SK-N-SH (cell line): ENCODE measurements at regions of chr11 and their contacts with region 1.

Region 1: GRCh38 chr11:125404776-125405435 is 91.2 kb downstream of the FEZ1 start:
- DNase-seq: peak; percentile 91
- H3K4me3 ChIP-seq: peak overlapping the region in 1 of 2 experiments; percentile 19; a peak in 1 of 4 replicates
- H3K27ac ChIP-seq: no peak overlapping the region
- H3K4me1 ChIP-seq: peaks cover 0 to under 1% of the 10 kb centered on the region in 2 experiments; a peak in 1 of 4 replicates
- H3K27me3 ChIP-seq: peaks cover 43% of the 10 kb centered on the region; the same call in 1 of the 2 replicates
- CTCF ChIP-seq: peak; percentile 83
- EP300 ChIP-seq: no peak
- RAD21 ChIP-seq: peak; percentile 86

Region 2: GRCh38 chr11:125111343-125112207 is 293.3 kb before region 1 on chr11 and contains the start of gene TMEM218:
- CTCF ChIA-PET with region 1: interaction called, 12 read pairs
- POLR2A ChIA-PET with region 1: no interaction called
- DNase-seq: peak; percentile 93
- H3K4me3 ChIP-seq: peak within 1 kb of the TSS; percentile 79 to 100
- H3K27ac ChIP-seq: peak within 1 kb of the TSS; percentile 46 to 84; a peak in 3 of 4 replicates
- H3K4me1 ChIP-seq: peaks cover 5 to 8% of the 10 kb centered on the region in 2 experiments; a peak in 3 of 4 replicates
- H3K27me3 ChIP-seq: no peaks in the 10 kb centered on the region
- CTCF ChIP-seq: no peak
- EP300 ChIP-seq: no peak
- RAD21 ChIP-seq: no peak
- polyA plus RNA-seq, gene TMEM218: 34.8 and 36.2 TPM in 2 replicates

Region 3: DNA sequence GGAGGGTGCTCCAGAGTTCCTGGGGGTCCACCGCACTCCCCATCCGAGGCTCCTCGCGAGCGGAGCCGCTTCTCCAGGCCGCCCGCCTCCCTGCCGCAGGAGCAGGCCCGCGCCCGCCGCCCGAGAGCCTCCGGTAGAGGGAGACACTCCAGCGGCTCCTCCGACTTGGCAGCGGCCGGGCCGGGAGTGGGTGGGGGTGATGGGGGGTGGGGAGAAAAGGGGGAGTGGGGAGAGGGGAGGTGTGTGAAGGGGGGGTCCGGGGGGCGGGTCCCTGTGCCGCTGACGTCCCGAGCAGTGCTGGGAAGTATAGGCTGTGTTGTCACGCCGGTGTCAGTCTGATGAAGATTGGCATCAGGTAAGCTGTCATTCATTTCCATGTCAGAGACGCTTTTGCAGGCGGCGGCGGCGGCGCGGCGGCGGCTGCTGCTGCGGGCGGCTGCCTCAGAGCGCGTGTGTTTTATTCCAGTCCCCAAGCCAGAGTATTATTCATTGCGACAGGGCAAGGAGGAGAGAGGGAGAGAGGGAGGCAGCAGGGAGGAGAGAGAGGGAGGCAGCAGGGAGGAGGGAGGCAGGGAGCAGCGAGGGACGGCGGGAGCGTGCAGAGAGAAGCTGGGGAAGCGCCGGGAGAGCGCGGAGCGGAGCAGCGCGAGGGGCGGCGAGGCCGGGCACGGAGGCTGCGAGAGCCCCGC is 240.3 kb before region 1 on chr11 and contains the start of gene PKNOX2:
- CTCF ChIA-PET with region 1: interaction called, 18 read pairs
- POLR2A ChIA-PET with region 1: no interaction called
- DNase-seq: peak; percentile 95
- H3K4me3 ChIP-seq: peak within 1 kb of the TSS; percentile 52 to 71
- H3K27ac ChIP-seq: no peak within 1 kb of the TSS
- H3K4me1 ChIP-seq: peaks cover 0 to 7% of the 10 kb centered on the region in 2 experiments; a peak in 1 of 4 replicates
- H3K27me3 ChIP-seq: peaks cover 6% of the 10 kb centered on the region
- CTCF ChIP-seq: peak; percentile 56
- EP300 ChIP-seq: no peak
- RAD21 ChIP-seq: peak; percentile 50
- polyA plus RNA-seq, gene PKNOX2: 0.02 TPM in 1 of 2 replicates, not detected in the other

Region 4: DNA sequence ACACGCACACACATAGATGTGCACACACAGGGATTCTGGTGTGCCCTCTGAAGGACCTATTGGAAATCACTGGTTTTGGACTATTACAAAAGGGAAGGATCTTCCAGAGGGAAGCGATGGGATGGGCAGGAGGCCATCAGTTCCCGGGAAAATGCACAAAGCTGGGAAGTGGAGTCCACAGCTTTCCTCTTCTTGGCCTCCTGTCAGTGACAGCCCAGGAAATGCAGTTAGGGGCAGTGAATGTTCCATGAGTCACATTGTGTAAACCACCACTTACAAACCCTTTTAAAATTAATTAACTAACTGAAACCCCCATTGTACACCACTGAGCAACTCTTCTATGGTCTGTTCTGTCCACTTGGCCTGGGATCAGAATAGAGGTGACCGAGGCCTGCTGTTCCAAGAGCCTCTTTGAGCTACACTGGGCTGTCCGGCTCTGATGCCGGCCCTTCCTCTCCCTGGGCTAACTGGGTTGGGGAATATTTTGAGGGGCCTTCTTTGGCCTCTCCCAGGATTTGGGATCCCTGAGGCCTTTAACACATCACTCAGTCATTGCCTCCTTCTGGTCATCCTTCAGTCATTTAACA is 46.6 kb before region 1 on chr11:
- CTCF ChIA-PET with region 1: interaction called, 33 read pairs
- POLR2A ChIA-PET with region 1: no interaction called
- DNase-seq: no peak
- H3K4me3 ChIP-seq: no peak overlapping the region
- H3K27ac ChIP-seq: no peak overlapping the region
- H3K4me1 ChIP-seq: no peaks in the 10 kb centered on the region
- H3K27me3 ChIP-seq: no peaks in the 10 kb centered on the region
- CTCF ChIP-seq: no peak
- EP300 ChIP-seq: no peak
- RAD21 ChIP-seq: no peak

Region 5: DNA sequence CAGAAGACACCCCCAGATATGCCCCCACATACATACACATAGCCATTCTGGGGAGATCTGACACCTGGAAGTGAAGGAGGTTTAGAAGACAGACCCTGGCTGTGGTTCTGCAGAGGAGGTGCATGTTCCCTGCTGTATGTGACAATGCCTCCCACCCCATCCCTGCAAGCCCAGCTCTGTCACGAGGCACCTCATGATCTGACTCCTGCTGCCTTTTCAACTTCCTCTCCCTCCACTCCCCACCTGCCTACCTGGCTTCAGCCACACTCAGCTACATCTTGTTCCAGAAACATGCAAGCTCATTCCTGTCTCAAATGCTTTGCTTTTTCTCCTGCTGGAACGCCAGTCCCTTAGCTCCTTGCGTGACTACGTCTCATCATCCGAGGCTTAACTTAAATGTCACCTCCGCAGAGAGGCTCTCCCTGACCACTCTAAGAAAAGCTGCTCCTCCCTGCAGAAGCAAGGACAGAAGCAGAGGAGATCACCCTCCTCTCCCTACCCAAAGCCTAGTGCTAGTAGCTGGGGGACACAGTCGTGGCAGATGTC is 23.3 kb before region 1 on chr11:
- CTCF ChIA-PET with region 1: interaction called, 15 read pairs
- POLR2A ChIA-PET with region 1: no interaction called
- DNase-seq: no peak
- H3K4me3 ChIP-seq: no peak overlapping the region
- H3K27ac ChIP-seq: no peak overlapping the region
- H3K4me1 ChIP-seq: no peaks in the 10 kb centered on the region
- H3K27me3 ChIP-seq: peaks cover 7% of the 10 kb centered on the region; the same call in 1 of the 2 replicates
- CTCF ChIP-seq: no peak
- EP300 ChIP-seq: no peak
- RAD21 ChIP-seq: no peak

Region 6: GRCh38 chr11:125429166-125429707 is 24.3 kb after region 1 on chr11:
- CTCF ChIA-PET with region 1: interaction called, 19 read pairs
- POLR2A ChIA-PET with region 1: no interaction called
- DNase-seq: peak; percentile 74
- H3K4me3 ChIP-seq: no peak overlapping the region; a peak in 1 of 4 replicates
- H3K27ac ChIP-seq: no peak overlapping the region
- H3K4me1 ChIP-seq: peaks cover 0 to 4% of the 10 kb centered on the region in 2 experiments; a peak in 1 of 4 replicates
- H3K27me3 ChIP-seq: peaks cover 6% of the 10 kb centered on the region; the same call in 1 of the 2 replicates
- CTCF ChIP-seq: peak; percentile 71
- EP300 ChIP-seq: no peak
- RAD21 ChIP-seq: peak; percentile 78

Region 7: DNA sequence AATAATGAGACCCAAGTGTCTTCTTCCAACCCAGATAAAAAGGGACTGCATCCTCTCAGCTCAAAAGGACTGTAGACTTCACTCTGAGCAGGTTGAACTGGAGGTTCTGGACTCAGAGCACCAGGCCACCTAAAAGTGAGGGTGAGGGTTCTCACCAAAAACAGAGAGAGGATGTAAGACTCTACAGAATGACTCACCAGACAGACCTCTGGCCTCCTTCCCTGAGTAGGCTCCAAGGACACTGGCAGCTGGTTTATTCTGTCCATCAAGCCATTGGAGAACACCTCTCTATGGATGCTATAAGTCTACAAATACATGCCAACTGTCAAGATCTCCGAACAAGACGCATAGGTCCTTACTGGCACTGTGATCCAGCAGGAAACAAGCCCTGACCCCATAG is 63.9 kb after region 1 on chr11:
- CTCF ChIA-PET with region 1: no interaction called
- POLR2A ChIA-PET with region 1: no interaction called
- DNase-seq: no peak
- H3K4me3 ChIP-seq: no peak overlapping the region
- H3K27ac ChIP-seq: no peak overlapping the region
- H3K4me1 ChIP-seq: no peaks in the 10 kb centered on the region; a peak in 1 of 4 replicates
- H3K27me3 ChIP-seq: no peaks in the 10 kb centered on the region
- CTCF ChIP-seq: no peak
- EP300 ChIP-seq: no peak
- RAD21 ChIP-seq: no peak

Region 8: GRCh38 chr11:125514336-125515101 is 109.6 kb after region 1 on chr11:
- CTCF ChIA-PET with region 1: no interaction called
- POLR2A ChIA-PET with region 1: no interaction called
- DNase-seq: peak; percentile 32
- H3K4me3 ChIP-seq: no peak overlapping the region
- H3K27ac ChIP-seq: no peak overlapping the region
- H3K4me1 ChIP-seq: peaks cover 0 to 8% of the 10 kb centered on the region in 2 experiments; a peak in 1 of 4 replicates
- H3K27me3 ChIP-seq: no peaks in the 10 kb centered on the region
- CTCF ChIP-seq: no peak
- EP300 ChIP-seq: no peak; a peak in 1 of 4 replicates
- RAD21 ChIP-seq: no peak